Activated naive CD4-positive, alpha-beta T cell treated with anti-CD3 and anti-CD28 coated beads for 36 hours (primary cell): ENCODE measurements at regions of chr11 and their contacts with region 1.

Region 1: GRCh38 chr11:58654079-58654907 is 31.8 kb downstream of the CNTF start:
- DNase-seq: peak; percentile 89
- H3K4me3 Mint-ChIP-seq: no peak overlapping the region
- H3K27ac Mint-ChIP-seq: no peak overlapping the region
- H3K4me1 Mint-ChIP-seq: peaks cover 18% of the 10 kb centered on the region
- H3K27me3 Mint-ChIP-seq: no peaks in the 10 kb centered on the region

Region 2: GRCh38 chr11:58004664-58005063 is 649.6 kb before region 1 on chr11:
- CTCF ChIA-PET with region 1: no interaction called
- intact Hi-C with region 1: no loop called
- DNase-seq: no peak
- H3K4me3 Mint-ChIP-seq: no peak overlapping the region
- H3K27ac Mint-ChIP-seq: no peak overlapping the region
- H3K4me1 Mint-ChIP-seq: peaks cover 4% of the 10 kb centered on the region
- H3K27me3 Mint-ChIP-seq: peaks cover 23% of the 10 kb centered on the region

Region 3: DNA sequence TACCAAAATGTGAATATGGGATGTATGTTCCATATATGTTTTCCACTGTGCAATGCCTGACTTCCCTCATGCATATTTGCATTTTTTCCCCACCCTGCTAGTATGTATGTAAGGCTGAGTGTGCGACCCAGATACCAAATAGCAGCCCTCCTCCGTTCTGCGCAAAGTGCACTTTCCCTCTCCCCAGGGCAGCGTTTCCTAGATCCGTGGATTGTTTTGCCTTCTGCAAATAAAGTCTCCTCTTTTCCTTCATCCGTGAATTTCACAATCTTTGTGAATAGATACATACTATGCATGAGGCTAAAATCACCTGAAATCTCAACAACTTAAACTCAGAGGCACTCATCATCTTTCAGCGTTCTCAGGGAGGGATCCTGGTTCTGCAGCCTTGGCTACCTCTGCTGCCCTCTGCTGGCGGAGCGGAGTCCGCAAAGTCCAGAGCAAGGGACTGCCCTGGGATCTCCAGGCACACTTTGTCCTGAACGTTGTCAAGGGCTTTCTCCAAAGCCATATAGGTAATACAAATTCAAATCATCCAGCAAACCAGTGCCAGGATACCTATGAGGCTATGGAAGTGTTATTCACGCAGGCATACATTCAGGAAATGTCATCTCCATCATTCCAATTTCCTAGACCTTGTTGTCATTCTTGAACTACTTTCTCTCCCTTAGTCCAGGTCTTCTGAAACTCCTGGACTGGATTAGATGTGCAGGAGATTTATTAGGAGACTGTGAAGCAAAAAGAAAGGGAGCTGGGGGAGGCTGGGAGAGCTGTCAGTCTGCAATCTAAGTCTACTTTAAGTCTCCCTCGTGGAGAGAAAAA is 21.3 kb after region 1 on chr11:
- CTCF ChIA-PET with region 1: interaction called, 22 read pairs
- intact Hi-C with region 1: loop called (anchors 1 kb)
- DNase-seq: peak; percentile 84
- H3K4me3 Mint-ChIP-seq: no peak overlapping the region
- H3K27ac Mint-ChIP-seq: no peak overlapping the region
- H3K4me1 Mint-ChIP-seq: no peaks in the 10 kb centered on the region
- H3K27me3 Mint-ChIP-seq: no peaks in the 10 kb centered on the region

Region 4: DNA sequence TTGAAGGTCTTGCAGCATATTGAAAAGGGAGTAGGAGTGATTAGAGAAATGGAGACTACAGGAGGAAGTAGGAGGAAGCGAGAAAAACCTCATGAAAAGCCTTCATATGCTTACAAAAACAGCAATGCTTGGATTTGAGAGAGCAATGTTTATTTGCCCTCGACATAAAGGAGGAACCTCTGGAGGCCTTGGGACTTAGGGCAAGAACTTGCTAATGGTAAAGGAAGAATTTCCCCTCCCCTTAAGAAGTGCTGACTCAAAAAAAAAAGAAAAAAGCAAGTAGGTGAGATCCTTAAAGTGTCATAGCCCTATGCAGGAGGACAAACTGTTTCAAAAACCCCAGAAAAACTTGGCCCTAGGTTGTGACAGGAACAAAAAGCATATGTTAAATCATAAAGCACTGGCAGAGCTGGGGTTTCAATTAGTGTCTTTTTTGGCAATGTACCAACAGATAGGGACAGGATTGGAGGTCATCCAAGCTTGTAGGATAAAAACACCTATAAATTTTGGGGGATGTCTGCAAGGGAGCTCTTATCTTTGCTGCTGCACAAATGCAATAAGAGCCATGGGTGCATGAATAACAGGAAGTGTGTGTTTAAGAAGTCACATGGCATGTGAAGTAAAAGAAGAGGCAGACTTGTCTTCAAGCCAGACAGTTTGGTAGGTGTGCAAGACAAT is 72.6 kb after region 1 on chr11:
- CTCF ChIA-PET with region 1: no interaction called
- intact Hi-C with region 1: loop called (anchors 5 kb)
- DNase-seq: peak; percentile 13
- H3K4me3 Mint-ChIP-seq: no peak overlapping the region
- H3K27ac Mint-ChIP-seq: peak overlapping the region; percentile 50
- H3K4me1 Mint-ChIP-seq: peaks cover 44% of the 10 kb centered on the region
- H3K27me3 Mint-ChIP-seq: no peaks in the 10 kb centered on the region

Region 5: GRCh38 chr11:58900479-58901420 is 246.5 kb after region 1 on chr11:
- CTCF ChIA-PET with region 1: interaction called, 4 read pairs
- intact Hi-C with region 1: loop called (anchors 1 kb)
- DNase-seq: peak; percentile 81
- H3K4me3 Mint-ChIP-seq: no peak overlapping the region
- H3K27ac Mint-ChIP-seq: no peak overlapping the region
- H3K4me1 Mint-ChIP-seq: no peaks in the 10 kb centered on the region
- H3K27me3 Mint-ChIP-seq: peaks cover 49% of the 10 kb centered on the region

Region 6: GRCh38 chr11:59135648-59136461 is 481.6 kb after region 1 on chr11:
- CTCF ChIA-PET with region 1: interaction called, 4 read pairs
- intact Hi-C with region 1: loop called (anchors 1 kb)
- DNase-seq: peak; percentile 93
- H3K4me3 Mint-ChIP-seq: peak overlapping the region; percentile 26
- H3K27ac Mint-ChIP-seq: no peak overlapping the region
- H3K4me1 Mint-ChIP-seq: peaks cover 6% of the 10 kb centered on the region
- H3K27me3 Mint-ChIP-seq: no peaks in the 10 kb centered on the region

Region 7: DNA sequence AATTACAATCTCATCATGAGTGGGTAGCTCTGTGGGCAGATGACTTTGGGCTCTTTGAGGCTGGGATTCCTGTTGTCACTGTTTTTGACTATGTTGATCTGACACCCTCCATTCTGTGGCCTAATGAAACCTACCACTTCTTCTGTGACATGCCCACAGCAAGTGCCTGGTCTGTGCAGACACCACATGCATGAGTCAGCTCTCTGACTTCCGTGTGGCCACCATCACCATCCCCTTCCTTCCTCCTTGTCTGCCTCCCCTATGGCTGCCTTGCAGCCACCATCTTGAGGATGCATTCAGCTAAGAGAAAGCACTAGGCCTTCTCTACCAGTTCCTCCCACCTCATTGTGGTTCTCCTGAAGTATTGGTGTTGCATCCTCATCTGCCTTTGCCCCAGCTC is 1074.6 kb after region 1 on chr11:
- CTCF ChIA-PET with region 1: no interaction called
- intact Hi-C with region 1: no loop called
- DNase-seq: no peak
- H3K4me3 Mint-ChIP-seq: no peak overlapping the region
- H3K27ac Mint-ChIP-seq: no peak overlapping the region
- H3K4me1 Mint-ChIP-seq: no peaks in the 10 kb centered on the region
- H3K27me3 Mint-ChIP-seq: no peaks in the 10 kb centered on the region